ENCODE measurements at regions of chr3 and their contacts with region 1.

Region 1: GRCh38 chr3:129942296-129942695 is 32.2 kb upstream of the TRH start:
- DNase-seq: peak; percentile 63
- ATAC-seq: peak; percentile 91 to 93

Region 2: GRCh38 chr3:130093741-130094391 is 151.6 kb after region 1 on chr3:
- intact Hi-C with region 1: loop called in 1 of 2 experiments (anchors 5 kb)
- DNase-seq: no peak
- ATAC-seq: no peak

Region 3: GRCh38 chr3:130395916-130396315 is 453.6 kb after region 1 on chr3:
- intact Hi-C with region 1: no loop called
- DNase-seq: no peak
- ATAC-seq: no peak

Measured in left cardiac atrium (tissue), 4 donors.